HEK293T (cell line): ENCODE measurements at regions of chr1 and their contacts with region 1.

Region 1: DNA sequence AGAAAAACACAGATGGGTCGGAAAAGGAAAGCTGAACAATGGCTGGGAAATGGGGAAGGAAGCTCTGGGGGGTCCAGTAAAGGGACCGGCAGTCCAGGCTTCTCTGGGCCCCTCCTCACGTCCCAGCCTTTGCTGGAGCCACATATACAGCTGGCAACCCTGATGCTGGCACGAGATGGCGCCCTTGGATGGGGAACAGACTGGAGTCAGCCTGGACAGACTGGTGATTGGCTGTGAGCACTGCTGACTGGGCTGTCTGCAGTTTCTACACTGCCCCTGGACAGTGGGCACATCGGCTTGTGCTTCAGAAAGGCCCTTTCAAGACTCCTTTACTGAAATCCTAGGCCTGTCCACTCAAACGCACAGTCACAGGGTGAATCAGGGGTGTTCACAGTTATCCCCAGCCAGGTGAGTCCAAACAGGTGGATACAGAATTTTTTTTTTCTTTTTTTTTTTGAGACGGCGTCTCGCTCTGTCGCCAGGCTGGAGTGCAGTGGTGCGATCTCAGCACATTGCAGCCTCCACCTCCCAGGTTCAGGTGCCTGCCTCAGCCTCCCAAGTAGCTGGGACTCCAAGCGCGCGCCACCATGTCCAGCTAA is 31.1 kb upstream of the ZBTB40 start:
- DNase-seq: peak; percentile 86

Region 2: GRCh38 chr1:22247527-22248245 is 172.9 kb before region 1 on chr1:
- CTCF ChIA-PET with region 1: no interaction called
- POLR2A ChIA-PET with region 1: no interaction called
- DNase-seq: no peak

Region 3: DNA sequence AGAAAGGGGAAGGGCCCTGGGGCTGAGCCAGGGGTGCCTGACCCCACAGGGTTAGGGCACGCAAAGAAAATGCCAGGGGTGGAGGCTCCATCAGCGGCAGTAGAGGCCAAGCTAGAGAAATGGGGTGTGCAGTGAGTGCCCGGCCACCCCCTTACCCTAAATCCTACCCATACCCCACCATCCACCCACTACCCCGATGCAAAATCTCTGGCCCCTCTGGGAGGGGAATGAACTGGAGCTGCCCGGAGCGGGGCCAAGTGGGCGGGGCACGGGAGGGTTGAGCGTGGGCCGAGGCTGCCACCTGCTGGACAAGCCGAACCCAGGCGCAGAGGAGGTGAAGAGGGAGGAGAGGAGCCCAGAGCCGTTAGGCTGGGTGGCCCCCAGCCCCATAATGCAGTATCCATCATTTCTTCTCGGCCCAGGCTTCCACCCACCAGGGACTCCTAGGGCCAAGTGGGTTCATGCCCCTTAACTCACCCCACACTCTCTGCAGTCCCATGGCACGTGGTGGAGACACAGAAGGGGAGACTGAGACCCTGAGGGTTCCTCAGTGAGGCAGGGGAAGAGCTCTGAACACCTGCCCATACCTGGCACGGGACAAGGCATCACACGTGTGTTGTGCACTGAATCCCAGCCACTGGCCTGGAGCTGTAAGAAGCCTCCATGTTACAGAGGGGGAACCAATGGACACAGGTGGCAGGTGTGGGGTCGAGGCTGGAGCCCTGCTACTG is 221.5 kb after region 1 on chr1:
- CTCF ChIA-PET with region 1: interaction called, 14 read pairs
- POLR2A ChIA-PET with region 1: no interaction called
- DNase-seq: peak; percentile 87